Activated CD4-positive, alpha-beta T cell treated with anti-CD3 and anti-CD28 coated beads, Interleukin-2, amount 10 ng/mL, durations not matched to agents 24 days and 14 days (primary cell): ENCODE measurements at regions of chr15 and their contacts with region 1.

Region 1: GRCh38 chr15:40564591-40565332 is at the start of gene CCDC32:
- DNase-seq: peak; percentile 99
- H3K4me3 Mint-ChIP-seq: peak within 1 kb of the TSS; percentile 91
- H3K27ac Mint-ChIP-seq: peak within 1 kb of the TSS; percentile 94
- H3K4me1 Mint-ChIP-seq: peaks cover 28% of the 10 kb centered on the region
- H3K27me3 Mint-ChIP-seq: no peaks in the 10 kb centered on the region
- total RNA-seq, gene CCDC32: 29.9 and 33.5 TPM in 2 replicates

Region 2: GRCh38 chr15:40382580-40383456 is 181.9 kb before region 1 on chr15 and contains the start of gene KNSTRN:
- intact Hi-C with region 1: loop called (anchors 2 kb)
- DNase-seq: peak; percentile 97
- H3K4me3 Mint-ChIP-seq: peak within 1 kb of the TSS; percentile 94
- H3K27ac Mint-ChIP-seq: peak within 1 kb of the TSS; percentile 95
- H3K4me1 Mint-ChIP-seq: peaks cover 26% of the 10 kb centered on the region
- H3K27me3 Mint-ChIP-seq: peaks cover 11% of the 10 kb centered on the region
- total RNA-seq, gene KNSTRN: 50.4 and 52.9 TPM in 2 replicates

Region 3: DNA sequence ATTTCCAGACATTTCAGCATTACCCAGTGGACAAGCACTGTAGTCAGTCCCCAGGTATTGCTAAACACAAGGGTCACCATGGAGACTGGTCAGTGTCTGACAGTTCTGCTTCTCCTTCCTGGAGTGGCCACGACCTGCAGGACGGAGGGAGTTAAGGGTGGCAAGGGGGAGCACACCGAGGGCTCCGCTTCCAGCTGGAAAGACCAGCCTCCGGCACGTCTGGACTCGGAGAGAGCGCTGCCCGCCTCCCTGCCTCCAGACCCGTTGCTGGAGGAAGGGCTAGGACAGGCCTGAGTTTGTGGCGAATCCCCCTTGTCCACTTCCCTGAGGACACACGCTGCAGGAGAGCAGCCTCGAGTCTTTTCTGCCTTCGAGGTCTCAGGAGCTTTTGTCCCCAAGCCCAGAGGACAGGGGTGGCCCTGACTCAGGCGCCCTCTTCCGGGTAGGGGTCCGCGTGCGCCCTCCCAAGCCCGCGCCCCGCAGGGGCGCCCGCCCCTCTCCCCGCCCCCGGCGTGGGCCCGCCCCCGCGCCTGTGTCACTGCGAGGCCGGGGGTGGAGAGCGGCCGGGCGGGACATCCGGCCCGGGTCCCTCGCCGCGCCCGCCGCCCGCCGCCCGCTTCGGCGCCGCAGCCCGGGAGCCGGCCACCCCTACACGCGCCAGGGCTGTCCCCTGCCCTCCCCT is 94.2 kb before region 1 on chr15 and contains the start of gene CHST14:
- intact Hi-C with region 1: loop called (anchors 5 kb)
- DNase-seq: peak; percentile 90
- H3K4me3 Mint-ChIP-seq: peak within 1 kb of the TSS; percentile 90
- H3K27ac Mint-ChIP-seq: peak within 1 kb of the TSS; percentile 83
- H3K4me1 Mint-ChIP-seq: peaks cover 26% of the 10 kb centered on the region
- H3K27me3 Mint-ChIP-seq: peaks cover 1% of the 10 kb centered on the region
- total RNA-seq, gene CHST14: 9.0 and 9.7 TPM in 2 replicates

Region 4: DNA sequence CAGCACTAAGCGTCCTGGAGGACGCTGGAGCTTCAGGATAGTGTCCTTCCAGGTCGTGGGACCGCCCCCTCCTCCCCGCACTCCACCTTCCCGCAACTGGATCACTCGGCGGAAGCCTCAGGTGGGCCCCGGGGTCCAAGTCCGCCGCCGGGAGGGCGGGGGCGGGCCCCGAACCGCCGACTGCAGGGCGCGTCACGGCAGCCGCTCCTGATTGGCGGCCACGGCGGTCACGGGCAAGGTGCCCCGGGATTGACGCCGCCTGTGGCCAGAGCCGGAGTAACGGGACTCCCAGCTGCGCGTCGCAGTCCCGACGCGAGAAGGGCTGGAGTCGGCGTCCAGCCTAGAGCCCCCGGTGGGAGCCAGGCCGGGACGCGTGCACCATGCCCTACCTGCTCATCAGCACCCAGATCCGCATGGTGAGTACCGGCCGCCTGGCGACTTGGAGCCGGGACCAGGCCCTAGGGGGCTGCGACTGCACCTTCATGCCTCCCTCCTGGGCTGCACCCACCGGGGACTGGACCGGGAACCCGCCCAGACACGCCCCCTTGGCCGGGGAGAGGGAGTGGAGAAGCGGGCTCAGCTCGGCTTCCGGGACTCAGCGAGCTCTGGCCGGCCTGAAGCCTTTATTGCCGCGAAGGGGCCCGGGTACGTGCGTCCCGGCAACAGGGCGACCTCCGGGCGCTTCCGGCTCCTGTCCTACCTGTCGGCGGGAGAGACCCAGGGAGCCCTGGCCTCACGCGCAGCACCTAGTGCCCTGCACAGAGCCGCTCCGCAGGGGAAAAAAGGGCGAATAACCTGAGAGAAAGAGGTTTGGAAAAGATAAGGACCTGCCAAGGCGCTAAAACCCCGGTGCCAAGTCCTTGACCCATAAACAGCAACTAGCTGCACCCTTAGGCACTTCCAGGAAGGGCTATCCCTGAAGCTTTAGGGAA is 199.3 kb after region 1 on chr15 and contains the start of gene GCHFR:
- intact Hi-C with region 1: loop called (anchors 10 kb)
- DNase-seq: peak; percentile 94
- H3K4me3 Mint-ChIP-seq: peak within 1 kb of the TSS; percentile 76
- H3K27ac Mint-ChIP-seq: peak within 1 kb of the TSS; percentile 89
- H3K4me1 Mint-ChIP-seq: peaks cover 27% of the 10 kb centered on the region
- H3K27me3 Mint-ChIP-seq: peaks cover 2% of the 10 kb centered on the region
- total RNA-seq, gene GCHFR: 34.7 and 37.2 TPM in 2 replicates

Region 5: GRCh38 chr15:40893733-40894688 is 329.2 kb after region 1 on chr15 and contains the start of gene VPS18:
- intact Hi-C with region 1: loop called (anchors 5 kb)
- DNase-seq: peak; percentile 100
- H3K4me3 Mint-ChIP-seq: peak within 1 kb of the TSS; percentile 100
- H3K27ac Mint-ChIP-seq: peak within 1 kb of the TSS; percentile 95
- H3K4me1 Mint-ChIP-seq: peaks cover 32% of the 10 kb centered on the region
- H3K27me3 Mint-ChIP-seq: peaks cover 3% of the 10 kb centered on the region
- total RNA-seq, gene VPS18: 11.2 and 11.3 TPM in 2 replicates